Activated naive CD4-positive, alpha-beta T cell treated with anti-CD3 and anti-CD28 coated beads for 36 hours (primary cell): ENCODE measurements at regions of chr5 and their contacts with region 1.

Region 1: DNA sequence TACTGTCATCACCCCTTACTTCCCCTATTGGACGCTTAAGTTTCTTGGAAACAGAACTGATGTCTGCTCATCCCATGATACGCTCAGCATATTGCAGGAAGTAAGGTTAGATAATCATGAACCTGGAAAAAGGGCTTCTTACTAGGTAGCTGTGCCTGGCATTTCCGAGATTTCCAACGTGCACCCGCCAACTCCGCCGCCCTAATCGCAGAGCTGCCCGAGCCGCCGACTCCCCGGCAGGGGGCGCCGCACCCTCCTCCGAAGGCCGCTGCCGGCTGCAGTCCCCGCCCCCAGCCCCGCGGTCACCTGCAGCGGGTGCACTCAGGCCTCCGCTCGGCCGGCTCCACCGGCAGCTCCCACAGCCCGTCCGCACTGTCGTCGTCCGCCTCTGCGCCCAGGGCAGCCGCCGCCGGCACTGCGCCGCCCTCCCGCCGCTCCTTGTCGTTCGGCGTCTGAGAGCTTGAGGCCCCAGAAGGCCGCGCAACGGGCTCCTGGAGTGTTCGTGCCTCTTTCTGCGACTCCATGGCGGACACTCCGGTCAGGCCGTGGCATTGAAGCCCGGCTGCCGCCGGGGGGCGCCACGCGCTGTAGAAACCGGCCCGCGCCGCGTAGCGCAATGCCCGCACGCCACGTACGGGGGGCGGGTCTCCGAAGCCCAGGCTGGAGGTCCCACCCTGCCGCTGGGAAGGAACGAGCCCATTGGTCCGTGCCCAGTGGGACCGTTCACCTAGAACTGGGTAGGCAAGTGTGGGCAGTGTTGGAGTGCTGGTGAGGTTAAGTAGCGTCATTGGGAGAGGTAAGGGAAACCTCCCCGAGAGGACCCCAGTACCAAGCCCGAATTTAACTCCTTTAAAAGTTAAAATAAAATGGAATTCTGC is at the start of gene DTWD2:
- DNase-seq: peak; percentile 92
- H3K4me3 Mint-ChIP-seq: peak within 1 kb of the TSS; percentile 76
- H3K27ac Mint-ChIP-seq: peak within 1 kb of the TSS; percentile 63
- H3K4me1 Mint-ChIP-seq: peaks cover 22% of the 10 kb centered on the region
- H3K27me3 Mint-ChIP-seq: no peaks in the 10 kb centered on the region
- total RNA-seq, gene DTWD2: 4.0 to 5.5 TPM

Region 2: DNA sequence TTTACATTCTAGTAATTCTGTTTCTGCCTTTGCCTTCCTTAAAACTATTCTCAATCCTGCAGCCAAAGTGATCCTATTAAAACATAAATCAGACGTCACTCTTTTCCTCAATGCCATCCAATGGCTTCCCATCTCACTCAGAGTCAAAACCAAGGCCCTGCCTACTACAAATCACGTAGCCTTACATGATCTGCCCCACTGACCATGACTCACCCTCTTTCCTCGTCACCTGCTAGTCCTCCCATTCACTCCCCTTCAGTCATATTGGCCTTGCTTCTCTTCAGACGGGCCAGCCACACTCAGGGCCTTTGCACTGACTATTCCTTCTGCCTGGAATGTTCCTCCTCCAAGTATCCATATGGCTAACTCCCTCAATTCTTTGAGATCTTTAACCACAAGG is 43.7 kb after region 1 on chr5:
- CTCF ChIA-PET with region 1: interaction called, 6 read pairs
- intact Hi-C with region 1: loop called (anchors 1 kb)
- DNase-seq: peak; percentile 42
- H3K4me3 Mint-ChIP-seq: no peak overlapping the region
- H3K27ac Mint-ChIP-seq: peak overlapping the region; percentile 89
- H3K4me1 Mint-ChIP-seq: peaks cover 46% of the 10 kb centered on the region
- H3K27me3 Mint-ChIP-seq: no peaks in the 10 kb centered on the region

Region 3: GRCh38 chr5:119255571-119256356 is 267.5 kb after region 1 on chr5:
- CTCF ChIA-PET with region 1: interaction called, 3 read pairs
- intact Hi-C with region 1: loop called (anchors 1 kb)
- DNase-seq: peak; percentile 32
- H3K4me3 Mint-ChIP-seq: no peak overlapping the region
- H3K27ac Mint-ChIP-seq: no peak overlapping the region
- H3K4me1 Mint-ChIP-seq: peaks cover 21% of the 10 kb centered on the region
- H3K27me3 Mint-ChIP-seq: no peaks in the 10 kb centered on the region

Region 4: DNA sequence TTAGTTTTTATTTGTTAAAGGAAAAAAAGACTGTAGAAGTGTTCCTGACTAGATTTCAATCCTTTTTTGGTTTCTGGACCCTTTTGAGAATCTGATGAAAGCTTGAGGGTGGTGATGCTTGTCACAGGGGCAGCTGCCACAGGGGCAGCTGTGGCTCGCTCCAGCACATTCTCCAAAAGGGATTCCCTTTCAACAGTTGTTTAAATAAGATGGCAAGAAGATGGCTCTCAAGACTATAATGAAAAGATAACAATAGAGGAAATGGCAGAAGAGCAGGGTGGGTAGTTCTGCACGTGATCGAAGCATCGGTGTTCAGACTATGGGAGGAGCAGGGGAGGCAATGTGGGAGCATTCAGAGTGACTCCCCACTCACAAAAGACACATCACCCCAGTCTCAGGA is 321.1 kb after region 1 on chr5:
- CTCF ChIA-PET with region 1: interaction called, 3 read pairs
- intact Hi-C with region 1: loop called (anchors 1 kb)
- DNase-seq: no peak
- H3K4me3 Mint-ChIP-seq: peak overlapping the region; percentile 21
- H3K27ac Mint-ChIP-seq: peak overlapping the region; percentile 95
- H3K4me1 Mint-ChIP-seq: peaks cover 96% of the 10 kb centered on the region
- H3K27me3 Mint-ChIP-seq: no peaks in the 10 kb centered on the region

Region 5: GRCh38 chr5:119435436-119436132 is 447.4 kb after region 1 on chr5:
- CTCF ChIA-PET with region 1: interaction called, 20 read pairs
- intact Hi-C with region 1: loop called (anchors 1 kb)
- DNase-seq: peak; percentile 85
- H3K4me3 Mint-ChIP-seq: no peak overlapping the region
- H3K27ac Mint-ChIP-seq: no peak overlapping the region
- H3K4me1 Mint-ChIP-seq: peaks cover 8% of the 10 kb centered on the region
- H3K27me3 Mint-ChIP-seq: peaks cover 7% of the 10 kb centered on the region

Region 6: DNA sequence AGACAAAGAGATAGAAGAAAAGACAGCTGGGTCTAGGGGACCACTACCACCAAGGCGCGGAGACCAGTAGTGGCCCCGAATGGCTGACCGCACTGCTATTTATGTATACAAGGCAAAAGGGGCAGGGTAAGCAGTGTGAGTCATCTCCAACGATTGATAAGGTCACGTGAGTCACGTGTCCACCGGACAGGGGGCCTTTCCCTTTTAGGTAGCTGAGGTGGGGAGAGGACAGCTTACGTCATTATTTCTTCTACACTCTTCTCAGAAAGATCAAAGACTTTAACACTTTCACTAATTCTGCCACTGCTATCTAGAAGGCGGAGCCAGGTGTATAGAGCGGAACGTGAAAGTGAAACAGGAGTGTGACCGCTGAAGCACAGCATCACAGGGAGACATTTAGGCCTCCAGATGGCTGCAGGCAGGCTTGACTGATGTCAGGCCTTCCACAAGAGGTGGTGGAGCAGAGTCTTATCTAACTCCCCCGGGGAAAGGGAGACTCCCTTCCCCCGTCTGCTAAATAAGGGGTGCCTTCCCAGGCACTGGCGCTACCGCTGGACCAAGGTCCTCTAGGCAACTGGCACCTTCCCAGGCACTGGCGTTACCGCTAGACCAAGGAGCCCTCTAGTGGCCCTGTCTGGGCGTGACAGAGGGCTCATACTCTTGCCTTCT is 1469.7 kb after region 1 on chr5:
- CTCF ChIA-PET with region 1: no interaction called
- intact Hi-C with region 1: loop called (anchors 2 kb)
- DNase-seq: peak; percentile 53
- H3K4me3 Mint-ChIP-seq: peak overlapping the region; percentile 30
- H3K27ac Mint-ChIP-seq: no peak overlapping the region
- H3K4me1 Mint-ChIP-seq: no peaks in the 10 kb centered on the region
- H3K27me3 Mint-ChIP-seq: peaks cover 10% of the 10 kb centered on the region